Activated T-helper 1 cell treated with anti-CD3 and anti-CD28 coated beads, Interleukin-12 subunit alpha, Interleukin-12 subunit beta, Interleukin-2, Interleukin-4 antibody, amounts not matched to agents 30 ng/mL and 10 ng/mL and 1 ng/mL, durations not matched to agents 14 hours and 24 hours and 36 hours (primary cell): ENCODE measurements at regions of chr9 and their contacts with region 1.

Region 1: DNA sequence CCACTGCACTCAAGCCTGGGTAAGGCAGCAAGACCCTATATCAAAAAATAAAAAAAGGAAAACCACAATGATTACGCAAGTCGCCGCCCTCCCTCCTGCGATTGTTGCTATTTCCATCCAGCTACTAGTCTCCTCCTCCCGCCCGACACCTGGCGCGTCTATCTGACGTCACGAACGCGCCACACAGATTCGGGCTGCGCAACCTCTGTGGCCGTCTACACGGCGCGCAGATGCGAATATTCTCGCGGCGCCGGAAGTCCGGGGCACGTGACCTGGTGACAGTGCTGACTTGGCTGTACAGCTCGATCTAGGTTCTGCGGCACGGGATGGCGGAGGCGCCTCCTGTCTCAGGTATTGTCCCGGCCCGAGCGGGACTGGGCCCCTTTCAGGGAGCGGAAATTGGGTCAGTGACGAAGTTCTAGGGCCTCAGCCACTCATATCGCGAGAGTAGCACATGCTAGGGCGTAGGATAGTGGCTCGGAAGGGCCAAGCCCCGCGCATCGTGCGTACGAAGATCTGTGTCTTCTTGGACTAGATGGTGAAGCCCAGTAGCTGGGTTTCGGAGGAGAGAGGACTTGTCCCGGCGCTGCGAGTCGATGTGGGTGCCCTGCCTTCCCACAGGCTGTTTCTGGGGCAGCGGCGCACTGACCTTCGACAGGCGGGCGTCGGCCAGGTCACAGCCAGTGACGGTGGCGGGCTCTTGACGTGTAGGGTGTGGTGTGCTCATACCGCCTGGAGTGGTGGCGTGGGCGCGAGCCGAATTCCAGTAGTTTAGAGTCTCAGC is at the start of gene NFX1:
- DNase-seq: peak; percentile 98
- H3K4me3 Mint-ChIP-seq: peak within 1 kb of the TSS; percentile 93
- H3K27ac Mint-ChIP-seq: peak within 1 kb of the TSS; percentile 100
- H3K4me1 Mint-ChIP-seq: peaks cover 54% of the 10 kb centered on the region
- H3K27me3 Mint-ChIP-seq: no peaks in the 10 kb centered on the region
- total RNA-seq, gene NFX1: 36.2 and 37.6 TPM in 2 replicates

Region 2: DNA sequence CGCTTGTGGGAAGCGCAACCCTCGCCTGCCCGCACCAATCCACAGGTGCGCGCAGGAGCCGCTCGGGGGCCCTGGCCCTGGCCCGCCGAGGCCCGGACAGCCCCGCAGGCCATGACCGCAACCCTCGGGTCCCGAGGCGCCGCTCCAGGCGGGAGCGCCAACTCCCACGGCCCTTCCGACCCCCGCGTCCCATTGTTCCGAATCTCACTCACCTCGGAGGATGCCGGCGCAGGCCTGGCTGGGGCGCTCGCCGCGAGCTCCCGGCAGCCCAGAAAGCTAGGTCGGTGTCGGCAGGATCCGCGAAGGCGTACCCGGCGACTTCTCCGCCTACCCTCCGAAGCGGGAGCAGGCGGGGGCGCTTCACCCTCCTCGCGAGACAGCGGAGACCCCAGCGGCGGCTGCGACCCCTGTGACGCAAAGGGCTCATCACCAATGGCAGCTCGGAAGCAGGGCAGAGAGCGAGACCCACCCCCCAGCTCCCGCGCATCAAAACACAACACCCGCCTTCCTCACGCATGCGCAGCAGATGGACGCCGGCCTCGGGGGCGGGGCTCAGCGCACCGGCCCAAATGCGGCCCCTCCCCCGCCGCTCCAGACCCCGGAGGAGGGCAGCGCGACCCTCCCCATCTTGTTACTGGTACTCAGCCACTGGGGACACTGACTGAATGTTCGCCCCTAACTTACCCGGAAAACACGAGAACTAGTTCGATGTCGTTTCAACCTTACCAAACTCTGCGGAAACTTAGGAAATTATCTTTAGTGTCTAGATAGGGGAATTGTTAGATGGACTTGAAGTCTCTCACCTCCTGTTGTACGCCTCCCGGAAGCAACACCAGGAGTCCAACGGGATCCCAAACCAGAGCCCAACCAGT is 739.6 kb before region 1 on chr9:
- intact Hi-C with region 1: loop called (anchors 1 kb)
- DNase-seq: peak; percentile 91
- H3K4me3 Mint-ChIP-seq: peak overlapping the region; percentile 93
- H3K27ac Mint-ChIP-seq: peak overlapping the region; percentile 99
- H3K4me1 Mint-ChIP-seq: peaks cover 38% of the 10 kb centered on the region
- H3K27me3 Mint-ChIP-seq: no peaks in the 10 kb centered on the region

Region 3: DNA sequence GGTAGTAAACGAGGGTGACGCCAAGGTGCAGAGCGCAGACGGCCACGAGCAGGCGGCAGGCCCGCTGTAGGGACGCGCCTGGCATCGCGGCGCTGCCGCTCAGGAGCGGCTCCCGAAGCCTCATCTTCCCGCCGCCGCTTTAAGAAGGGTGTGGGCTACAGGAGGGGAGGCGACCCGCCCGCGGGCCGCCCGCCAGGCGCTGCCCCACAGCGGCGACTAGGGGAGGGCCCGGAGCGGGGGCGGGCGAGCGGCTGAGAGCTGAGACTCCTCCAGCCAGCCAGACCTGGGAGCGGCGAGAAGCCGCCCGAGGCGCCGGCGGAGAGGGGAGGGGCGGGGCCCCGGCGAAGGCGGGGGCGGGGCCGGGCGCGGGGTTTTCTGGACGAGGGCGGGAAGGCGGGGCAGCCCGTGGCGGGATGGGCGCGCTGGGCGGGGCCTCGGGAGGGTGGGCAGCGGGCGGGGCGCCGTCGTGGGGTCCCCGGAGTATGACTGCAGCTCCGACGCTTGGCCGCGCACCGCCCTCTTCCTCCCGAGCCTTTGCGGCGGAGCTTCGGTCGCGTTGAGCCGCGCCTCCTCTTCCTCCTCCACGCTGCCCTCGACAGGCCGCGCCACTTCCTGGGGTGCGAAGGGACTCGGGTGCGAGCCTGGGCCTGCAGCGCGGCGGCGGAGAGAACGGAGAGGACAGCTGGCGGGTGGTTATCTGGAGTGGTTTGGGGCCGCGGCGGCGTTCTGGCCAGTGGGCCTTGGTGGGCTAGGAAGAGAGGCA is 123.2 kb before region 1 on chr9 and contains the start of gene B4GALT1:
- intact Hi-C with region 1: loop called (anchors 1 kb)
- DNase-seq: peak; percentile 91
- H3K4me3 Mint-ChIP-seq: peak within 1 kb of the TSS; percentile 96
- H3K27ac Mint-ChIP-seq: peak within 1 kb of the TSS; percentile 98
- H3K4me1 Mint-ChIP-seq: peaks cover 71% of the 10 kb centered on the region
- H3K27me3 Mint-ChIP-seq: no peaks in the 10 kb centered on the region
- total RNA-seq, gene B4GALT1: 64.4 and 66.5 TPM in 2 replicates

Region 4: GRCh38 chr9:33320568-33321261 is 30.3 kb after region 1 on chr9:
- intact Hi-C with region 1: loop called (anchors 1 kb)
- DNase-seq: no peak
- H3K4me3 Mint-ChIP-seq: no peak overlapping the region
- H3K27ac Mint-ChIP-seq: peak overlapping the region; percentile 53
- H3K4me1 Mint-ChIP-seq: peaks cover 13% of the 10 kb centered on the region
- H3K27me3 Mint-ChIP-seq: no peaks in the 10 kb centered on the region

Region 5: GRCh38 chr9:33446946-33447798 is 156.7 kb after region 1 on chr9 and contains the start of gene AQP3:
- intact Hi-C with region 1: loop called (anchors 1 kb)
- DNase-seq: peak; percentile 72
- H3K4me3 Mint-ChIP-seq: peak within 1 kb of the TSS; percentile 93
- H3K27ac Mint-ChIP-seq: peak within 1 kb of the TSS; percentile 90
- H3K4me1 Mint-ChIP-seq: peaks cover 40% of the 10 kb centered on the region
- H3K27me3 Mint-ChIP-seq: no peaks in the 10 kb centered on the region
- total RNA-seq, gene AQP3: 3.4 and 6.1 TPM in 2 replicates

Region 6: DNA sequence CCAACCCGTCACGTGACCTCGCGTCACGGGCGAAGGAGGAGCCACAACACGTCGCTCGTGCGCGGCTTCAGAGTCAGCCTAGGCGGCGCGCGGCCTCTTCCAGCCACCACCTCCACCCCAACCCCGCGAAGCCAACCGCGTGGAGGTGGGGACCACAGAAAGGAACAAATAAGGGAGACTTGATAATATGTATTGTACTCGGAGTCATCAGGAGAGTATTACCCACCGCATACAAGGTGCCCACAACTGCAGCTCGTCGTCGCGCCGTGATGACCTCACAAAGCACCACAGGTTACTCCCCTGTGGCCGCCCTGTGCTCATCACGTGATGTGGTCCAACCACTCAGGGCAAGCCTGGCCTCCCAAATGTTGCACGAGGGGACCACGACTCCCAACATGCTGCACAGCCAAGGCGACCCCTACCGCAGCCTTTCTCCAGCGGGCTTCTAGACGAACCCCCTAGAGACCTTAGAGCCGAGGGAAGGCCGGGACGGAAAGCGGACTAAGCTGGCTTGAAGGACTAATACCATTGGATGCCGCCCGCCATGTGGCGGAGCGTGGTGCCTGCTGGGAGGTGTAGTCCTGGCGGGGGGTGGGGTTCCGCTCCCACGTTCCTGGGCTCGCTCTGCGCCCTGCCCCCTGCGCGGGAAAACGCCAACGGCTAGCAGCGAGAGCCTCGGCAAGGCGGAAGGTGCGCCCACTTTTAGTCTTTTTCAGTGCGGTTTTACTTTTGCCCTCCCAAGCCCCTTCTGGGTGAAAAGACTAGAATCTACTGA is 758.7 kb after region 1 on chr9:
- intact Hi-C with region 1: loop called (anchors 2 kb)
- DNase-seq: peak; percentile 94
- H3K4me3 Mint-ChIP-seq: peak overlapping the region; percentile 98
- H3K27ac Mint-ChIP-seq: peak overlapping the region; percentile 100
- H3K4me1 Mint-ChIP-seq: peaks cover 44% of the 10 kb centered on the region
- H3K27me3 Mint-ChIP-seq: no peaks in the 10 kb centered on the region